ENCODE measurements at regions of chr14 and their contacts with region 1.

Region 1: GRCh38 chr14:59897761-59898383 is 22.1 kb upstream of the LRRC9 start:
- DNase-seq: peak; percentile 36 to 58
- H3K4me3 ChIP-seq: no peak overlapping the region
- H3K4me3 Mint-ChIP-seq: no peak overlapping the region
- H3K27ac Mint-ChIP-seq: no peak overlapping the region
- H3K4me1 ChIP-seq: no peaks in the 10 kb centered on the region
- H3K4me1 Mint-ChIP-seq: no peaks in the 10 kb centered on the region
- H3K27me3 ChIP-seq: no peaks in the 10 kb centered on the region
- H3K27me3 Mint-ChIP-seq: peaks cover 5% of the 10 kb centered on the region
- CTCF ChIP-seq: peak; percentile 67 to 75

Region 2: DNA sequence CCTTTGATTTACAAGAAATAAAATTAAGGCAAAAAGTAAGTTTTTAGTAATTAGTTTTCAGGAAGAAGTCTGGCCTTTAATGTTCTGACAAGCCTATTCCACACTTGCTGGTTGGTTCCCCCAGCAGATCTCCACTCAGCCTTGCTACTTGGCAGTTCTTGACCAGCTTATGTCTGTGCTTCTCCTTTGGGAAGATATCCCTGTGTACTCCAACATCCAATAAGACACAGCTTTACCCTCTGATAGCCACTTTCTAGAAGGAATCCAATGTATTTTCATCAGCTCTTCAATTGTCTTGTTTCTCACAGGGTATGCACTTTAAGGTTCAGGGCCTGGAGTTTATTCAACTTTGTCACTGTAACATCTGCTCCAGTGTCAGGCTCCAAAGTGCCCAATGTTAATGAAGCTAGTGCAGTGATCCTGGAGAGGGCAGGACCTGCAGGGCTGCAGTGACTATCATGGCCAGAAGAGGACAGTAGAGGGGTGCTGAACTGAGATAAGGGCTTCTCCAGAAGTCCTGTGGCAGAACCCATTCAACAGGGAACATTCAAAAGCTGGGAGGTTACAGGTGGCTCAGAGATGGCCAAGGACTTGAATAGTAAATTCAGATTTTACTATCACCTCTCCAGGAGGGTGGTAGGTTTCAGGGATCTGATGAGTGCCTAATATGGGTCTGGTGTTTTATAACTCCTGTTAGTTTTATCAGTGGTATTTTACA is 390.6 kb before region 1 on chr14:
- CTCF ChIA-PET with region 1: interaction called, 16 read pairs
- POLR2A ChIA-PET with region 1: no interaction called
- intact Hi-C with region 1: loop called (anchors 2 kb)
- DNase-seq: peak; percentile 78 to 81
- H3K4me3 ChIP-seq: no peak overlapping the region
- H3K4me3 Mint-ChIP-seq: no peak overlapping the region
- H3K27ac Mint-ChIP-seq: no peak overlapping the region
- H3K4me1 ChIP-seq: no peaks in the 10 kb centered on the region; the same call in 1 of the 2 replicates
- H3K4me1 Mint-ChIP-seq: peaks cover 12% of the 10 kb centered on the region
- H3K27me3 ChIP-seq: no peaks in the 10 kb centered on the region
- H3K27me3 Mint-ChIP-seq: no peaks in the 10 kb centered on the region
- CTCF ChIP-seq: peak; percentile 75 to 98

Region 3: DNA sequence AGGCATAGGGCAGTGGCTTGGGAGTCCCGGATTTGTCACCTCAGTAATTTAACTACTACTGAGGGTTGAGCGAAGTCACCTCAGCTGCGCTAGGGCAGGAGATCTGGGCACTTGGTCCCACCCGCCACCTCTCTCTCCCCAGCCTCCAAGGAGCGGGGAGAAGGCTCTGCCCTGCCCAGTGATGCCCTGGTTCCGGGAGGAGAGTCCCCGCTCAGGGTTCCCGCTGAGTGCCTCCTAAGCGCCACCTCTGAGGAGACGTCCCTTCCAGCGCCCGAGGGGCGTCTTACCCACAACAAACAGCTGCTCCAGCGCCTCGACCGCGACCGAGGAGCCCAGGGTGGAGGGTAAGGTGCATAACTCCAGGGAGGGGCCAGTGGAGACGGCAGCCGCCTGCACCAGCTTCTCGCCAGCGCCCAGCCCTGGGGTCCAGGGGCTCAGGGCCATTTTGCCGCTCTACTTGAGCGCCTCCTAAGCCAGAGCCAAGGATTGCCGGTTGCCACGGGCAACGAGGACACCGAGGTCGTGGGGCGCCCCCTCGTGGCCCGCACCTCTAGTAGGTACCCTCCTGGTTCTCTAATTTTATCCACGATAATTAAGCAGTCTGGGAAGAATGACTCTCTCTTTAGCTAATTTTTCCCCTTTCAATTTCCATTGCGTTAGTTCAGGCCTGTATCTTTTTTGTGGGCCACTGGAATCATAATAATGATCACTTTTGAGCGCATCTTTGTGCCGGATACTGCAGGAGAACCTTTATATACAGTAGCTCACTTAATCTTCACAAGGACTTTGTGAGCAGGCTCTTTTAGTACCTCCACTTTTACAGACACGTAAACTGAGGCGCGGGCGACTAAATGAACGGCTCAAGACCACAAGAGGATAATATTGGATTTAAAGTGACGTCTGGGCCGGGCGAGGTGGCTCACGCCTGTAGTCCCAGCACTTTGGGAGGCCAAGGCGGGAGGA is 321.3 kb before region 1 on chr14 and contains the start of gene CCDC175:
- CTCF ChIA-PET with region 1: no interaction called
- POLR2A ChIA-PET with region 1: no interaction called
- intact Hi-C with region 1: loop called (anchors 5 kb)
- DNase-seq: peak; percentile 81 to 84
- H3K4me3 ChIP-seq: peak within 1 kb of the TSS; percentile 39
- H3K4me3 Mint-ChIP-seq: peak within 1 kb of the TSS; percentile 69
- H3K27ac Mint-ChIP-seq: no peak within 1 kb of the TSS
- H3K4me1 ChIP-seq: no peaks in the 10 kb centered on the region
- H3K4me1 Mint-ChIP-seq: no peaks in the 10 kb centered on the region
- H3K27me3 ChIP-seq: no peaks in the 10 kb centered on the region
- H3K27me3 Mint-ChIP-seq: no peaks in the 10 kb centered on the region
- CTCF ChIP-seq: peak; percentile 77 to 81
- total RNA-seq, gene CCDC175: not detected in 2 replicates

Region 4: DNA sequence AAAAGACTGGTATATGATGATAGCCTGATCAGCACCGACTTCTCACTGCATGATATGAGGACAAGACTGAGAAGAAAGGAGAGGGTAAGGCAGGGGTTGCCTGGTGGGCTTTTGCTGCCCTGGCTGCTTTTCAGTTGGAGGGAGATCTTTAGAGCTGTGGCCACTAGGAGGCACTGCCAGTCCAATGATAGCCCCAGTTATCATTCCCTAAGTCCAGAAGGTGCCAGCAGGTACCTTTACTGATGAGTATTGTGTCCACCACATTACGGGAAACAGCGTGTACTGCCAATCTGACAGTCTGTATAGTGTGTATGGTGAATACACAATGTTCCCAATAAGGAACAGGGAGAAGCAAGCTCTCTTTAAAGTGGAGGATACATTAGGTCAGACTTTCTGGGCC is 265.5 kb before region 1 on chr14:
- CTCF ChIA-PET with region 1: interaction called, 8 read pairs
- POLR2A ChIA-PET with region 1: no interaction called
- intact Hi-C with region 1: loop called (anchors 1 kb)
- DNase-seq: peak in 1 of 2 experiments; percentile 24
- H3K4me3 ChIP-seq: no peak overlapping the region
- H3K4me3 Mint-ChIP-seq: no peak overlapping the region
- H3K27ac Mint-ChIP-seq: no peak overlapping the region
- H3K4me1 ChIP-seq: 0 out of 2 replicates have a peak, but pooled peaks cover 3% of the 10 kb centered on the region
- H3K4me1 Mint-ChIP-seq: no peaks in the 10 kb centered on the region
- H3K27me3 ChIP-seq: no peaks in the 10 kb centered on the region
- H3K27me3 Mint-ChIP-seq: peaks cover 15% of the 10 kb centered on the region
- CTCF ChIP-seq: peak; percentile 25 to 39

Region 5: GRCh38 chr14:59657769-59658168 is 240.1 kb before region 1 on chr14:
- CTCF ChIA-PET with region 1: interaction called, 12 read pairs
- POLR2A ChIA-PET with region 1: no interaction called
- intact Hi-C with region 1: no loop called
- DNase-seq: no peak
- H3K4me3 ChIP-seq: no peak overlapping the region
- H3K4me3 Mint-ChIP-seq: no peak overlapping the region
- H3K27ac Mint-ChIP-seq: no peak overlapping the region
- H3K4me1 ChIP-seq: no peaks in the 10 kb centered on the region
- H3K4me1 Mint-ChIP-seq: no peaks in the 10 kb centered on the region
- H3K27me3 ChIP-seq: no peaks in the 10 kb centered on the region
- H3K27me3 Mint-ChIP-seq: peaks cover 10% of the 10 kb centered on the region
- CTCF ChIP-seq: no peak

Region 6: GRCh38 chr14:59707778-59708561 is 189.9 kb before region 1 on chr14:
- CTCF ChIA-PET with region 1: interaction called, 18 read pairs
- POLR2A ChIA-PET with region 1: no interaction called
- intact Hi-C with region 1: no loop called
- DNase-seq: no peak
- H3K4me3 ChIP-seq: no peak overlapping the region
- H3K4me3 Mint-ChIP-seq: no peak overlapping the region
- H3K27ac Mint-ChIP-seq: no peak overlapping the region
- H3K4me1 ChIP-seq: no peaks in the 10 kb centered on the region
- H3K4me1 Mint-ChIP-seq: no peaks in the 10 kb centered on the region
- H3K27me3 ChIP-seq: no peaks in the 10 kb centered on the region
- H3K27me3 Mint-ChIP-seq: peaks cover 4% of the 10 kb centered on the region
- CTCF ChIP-seq: no peak

Region 7: GRCh38 chr14:60553808-60554207 is 655.9 kb after region 1 on chr14:
- CTCF ChIA-PET with region 1: no interaction called
- POLR2A ChIA-PET with region 1: no interaction called
- intact Hi-C with region 1: no loop called
- DNase-seq: no peak
- H3K4me3 ChIP-seq: no peak overlapping the region
- H3K4me3 Mint-ChIP-seq: no peak overlapping the region
- H3K27ac Mint-ChIP-seq: no peak overlapping the region
- H3K4me1 ChIP-seq: no peaks in the 10 kb centered on the region
- H3K4me1 Mint-ChIP-seq: no peaks in the 10 kb centered on the region
- H3K27me3 ChIP-seq: no peaks in the 10 kb centered on the region
- H3K27me3 Mint-ChIP-seq: peaks cover 12% of the 10 kb centered on the region
- CTCF ChIP-seq: no peak

Measured in Caco-2 (cell line).